Left colon (tissue), 2 donors: ENCODE measurements at regions of chr2 and their contacts with region 1.

Region 1: DNA sequence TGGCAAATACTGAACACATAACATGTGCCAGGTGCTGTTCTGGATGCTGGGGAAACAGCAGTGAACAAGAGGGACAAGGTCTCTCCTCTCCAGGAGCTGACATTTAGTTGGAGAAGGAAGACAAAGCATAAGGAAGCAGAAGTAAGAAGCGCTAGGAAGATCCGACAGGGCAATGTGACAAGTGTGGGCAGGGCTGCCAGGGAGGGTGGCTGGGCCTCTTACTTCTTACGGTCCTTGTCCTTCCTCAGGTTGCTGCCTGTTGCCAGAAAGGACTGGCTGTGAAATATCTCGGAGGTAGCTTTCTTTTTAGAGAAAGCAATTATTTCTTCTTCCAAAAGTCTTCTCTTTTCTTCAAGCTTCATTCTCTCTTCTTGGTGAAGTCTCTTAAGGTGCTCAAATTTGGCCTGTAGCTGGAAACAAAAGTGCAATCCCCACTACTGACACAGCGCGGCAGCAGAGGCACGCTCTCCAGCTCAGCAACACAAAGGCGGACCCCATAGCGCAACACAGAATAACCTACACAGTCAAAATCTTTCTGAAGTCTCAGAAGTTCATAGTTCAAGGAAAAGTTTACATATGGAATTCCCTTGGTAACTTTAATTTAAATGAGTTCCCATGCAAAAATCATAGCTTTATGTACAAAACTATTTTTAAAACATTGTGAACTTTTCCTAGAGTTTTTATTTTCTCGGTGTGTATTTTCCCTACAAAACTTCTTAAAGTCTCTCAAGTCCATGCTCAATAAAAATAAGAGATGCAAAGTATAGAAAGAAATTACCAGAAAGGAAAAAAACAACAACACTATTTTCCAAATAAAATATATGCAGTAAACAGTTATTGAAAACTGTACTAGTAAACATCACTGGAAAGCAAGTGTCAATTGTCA is 67.7 kb downstream of the SEPTIN10 start:
- DNase-seq: peak in 1 of 2 donors; percentile 72
- ATAC-seq: peak; percentile 89

Region 2: GRCh38 chr2:109722026-109722425 is 176.0 kb after region 1 on chr2:
- intact Hi-C with region 1: loop called in 1 of 2 experiments (anchors 10 kb)
- DNase-seq: peak in 1 of 2 donors; percentile 60
- ATAC-seq: peak; percentile 44